Activated CD4-positive, alpha-beta T cell treated with anti-CD3 and anti-CD28 coated beads, Interleukin-2, amount 10 ng/mL, durations not matched to agents 24 days and 14 days (primary cell): ENCODE measurements at regions of chr21 and their contacts with region 1.

Region 1: GRCh38 chr21:30718239-30718909 is at the start of gene KRTAP21-3:
- DNase-seq: peak; percentile 67
- H3K4me3 Mint-ChIP-seq: peak within 1 kb of the TSS; percentile 62
- H3K27ac Mint-ChIP-seq: peak within 1 kb of the TSS; percentile 68
- H3K4me1 Mint-ChIP-seq: peaks cover 31% of the 10 kb centered on the region
- H3K27me3 Mint-ChIP-seq: peaks cover 2% of the 10 kb centered on the region
- total RNA-seq, gene KRTAP21-3: not detected in 2 replicates

Region 2: GRCh38 chr21:28832013-28832714 is 1886.2 kb before region 1 on chr21:
- intact Hi-C with region 1: loop called (anchors 10 kb)
- DNase-seq: peak; percentile 84
- H3K4me3 Mint-ChIP-seq: peak overlapping the region; percentile 75
- H3K27ac Mint-ChIP-seq: peak overlapping the region; percentile 83
- H3K4me1 Mint-ChIP-seq: peaks cover 58% of the 10 kb centered on the region
- H3K27me3 Mint-ChIP-seq: no peaks in the 10 kb centered on the region

Region 3: DNA sequence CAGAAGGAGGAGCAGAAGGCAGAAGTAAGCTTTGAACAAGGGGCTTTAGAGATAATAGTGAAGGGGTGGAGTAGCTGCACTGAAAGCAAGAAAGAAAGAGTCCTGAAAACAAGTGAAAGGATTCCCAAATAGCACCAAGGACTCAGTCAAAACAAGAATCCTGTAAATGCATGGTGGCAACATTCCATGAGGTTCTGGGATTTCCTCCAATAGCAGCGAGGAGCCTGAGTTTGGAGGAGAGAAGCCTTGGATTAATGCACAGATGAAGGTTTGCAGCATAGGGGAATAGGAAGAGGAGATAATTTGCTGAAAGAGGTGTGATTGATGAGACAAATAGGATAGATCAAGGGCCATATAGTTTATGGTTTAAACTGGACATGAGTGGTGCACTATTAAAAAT is 139.0 kb before region 1 on chr21:
- intact Hi-C with region 1: no loop called
- DNase-seq: no peak
- H3K4me3 Mint-ChIP-seq: no peak overlapping the region
- H3K27ac Mint-ChIP-seq: no peak overlapping the region
- H3K4me1 Mint-ChIP-seq: no peaks in the 10 kb centered on the region
- H3K27me3 Mint-ChIP-seq: no peaks in the 10 kb centered on the region

Region 4: GRCh38 chr21:31293986-31294385 is 575.6 kb after region 1 on chr21:
- intact Hi-C with region 1: loop called (anchors 1 kb)
- DNase-seq: peak; percentile 58
- H3K4me3 Mint-ChIP-seq: peak overlapping the region; percentile 54
- H3K27ac Mint-ChIP-seq: peak overlapping the region; percentile 87
- H3K4me1 Mint-ChIP-seq: peaks cover 44% of the 10 kb centered on the region
- H3K27me3 Mint-ChIP-seq: no peaks in the 10 kb centered on the region